ENCODE measurements at regions of chr2 and their contacts with region 1.

Region 1: DNA sequence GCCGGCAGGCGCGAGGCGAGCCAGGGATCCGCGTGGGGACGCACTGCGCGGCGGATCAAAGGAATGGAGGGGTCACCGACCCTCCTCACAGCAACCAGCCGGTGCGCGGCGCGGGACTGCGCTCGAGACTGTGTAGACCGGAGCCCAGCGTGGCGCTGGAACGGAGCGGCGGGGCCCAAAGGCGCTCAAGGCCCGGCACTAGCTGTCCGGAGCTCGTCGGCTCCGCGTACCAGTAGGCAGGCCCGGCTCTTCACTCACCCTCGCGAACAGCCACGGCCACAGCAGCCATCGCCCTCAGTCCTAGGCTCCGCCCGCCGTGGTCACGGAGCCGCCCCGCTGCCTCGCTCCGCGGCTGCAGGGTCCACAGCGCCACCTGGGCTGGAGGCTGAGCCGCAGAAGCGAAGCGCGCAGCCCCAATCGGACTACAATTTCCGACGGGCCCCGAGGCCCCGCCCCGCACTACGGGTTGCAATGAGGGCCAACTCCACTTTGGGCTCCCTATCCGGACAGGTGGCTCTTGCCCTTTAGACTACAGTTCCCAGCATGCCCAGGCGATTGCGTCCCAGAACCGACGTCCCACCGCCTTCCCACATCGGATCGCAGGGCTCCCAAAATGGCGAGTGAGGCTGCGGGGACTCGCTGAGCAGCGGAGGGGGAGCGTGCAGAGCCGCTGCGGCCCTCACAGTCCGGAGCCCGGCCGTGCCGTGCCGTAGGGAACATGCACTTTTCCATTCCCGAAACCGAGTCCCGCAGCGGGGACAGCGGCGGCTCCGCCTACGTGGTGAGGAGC is at the starts of genes EIF2B4 and SNX17:
- DNase-seq: peak; percentile 97
- ATAC-seq: peak; percentile 92
- H3K4me3 ChIP-seq: peak within 1 kb of the TSS; percentile 85
- H3K27ac ChIP-seq: peak within 1 kb of the TSS; percentile 93
- H3K4me1 ChIP-seq: peaks cover 4% of the 10 kb centered on the region; the same call in 1 of the 2 replicates
- H3K27me3 ChIP-seq: no peaks in the 10 kb centered on the region
- CTCF ChIP-seq: peak; percentile 74 to 99 (median 85); a peak in 5 of 6 replicates
- EP300 ChIP-seq: no peak; a peak in 1 of 4 replicates
- POLR2A ChIP-seq: peak; percentile 95
- RAD21 ChIP-seq: peak; percentile 50
- polyA plus RNA-seq, gene EIF2B4: 13.4 to 27.8 TPM
- polyA plus RNA-seq, gene SNX17: 6.5 to 18.9 TPM

Region 2: GRCh38 chr2:27322766-27323595 is 47.2 kb before region 1 on chr2 and contains the start of gene MPV17:
- CTCF ChIA-PET with region 1: no interaction called
- POLR2A ChIA-PET with region 1: interaction called, 5 read pairs
- RAD21 ChIA-PET with region 1: interaction called, 5 read pairs
- SMC1A ChIA-PET with region 1: interaction called, 4 read pairs
- in situ Hi-C with region 1: no loop called
- intact Hi-C with region 1: loop called (anchors 2 kb)
- DNase-seq: peak; percentile 61
- ATAC-seq: peak; percentile 97
- H3K4me3 ChIP-seq: peak within 1 kb of the TSS; percentile 99
- H3K27ac ChIP-seq: peak within 1 kb of the TSS; percentile 95
- H3K4me1 ChIP-seq: peaks cover 6% of the 10 kb centered on the region
- H3K27me3 ChIP-seq: no peaks in the 10 kb centered on the region
- CTCF ChIP-seq: no peak
- EP300 ChIP-seq: 0 out of 4 replicates have a peak, but pooled peaks of 1 of the 2 experiments have one; percentile 12
- POLR2A ChIP-seq: peak; percentile 95
- RAD21 ChIP-seq: no peak
- polyA plus RNA-seq, gene MPV17: 67.6 to 69.8 TPM

Region 3: GRCh38 chr2:27356382-27357181 is 13.6 kb before region 1 on chr2 and contains the start of gene GTF3C2:
- CTCF ChIA-PET with region 1: interaction called, 8 read pairs
- POLR2A ChIA-PET with region 1: interaction called, 10 read pairs
- RAD21 ChIA-PET with region 1: interaction called, 3 read pairs
- SMC1A ChIA-PET with region 1: interaction called, 11 read pairs
- in situ Hi-C with region 1: no loop called
- intact Hi-C with region 1: loop called (anchors 1 kb)
- DNase-seq: peak; percentile 88
- ATAC-seq: peak; percentile 91
- H3K4me3 ChIP-seq: peak within 1 kb of the TSS; percentile 97
- H3K27ac ChIP-seq: peak within 1 kb of the TSS; percentile 96
- H3K4me1 ChIP-seq: no peaks in the 10 kb centered on the region; the same call in 1 of the 2 replicates
- H3K27me3 ChIP-seq: no peaks in the 10 kb centered on the region
- CTCF ChIP-seq: no peak
- EP300 ChIP-seq: no peak
- POLR2A ChIP-seq: peak; percentile 81
- RAD21 ChIP-seq: no peak
- polyA plus RNA-seq, gene GTF3C2: 45.9 to 59.0 TPM

Region 4: DNA sequence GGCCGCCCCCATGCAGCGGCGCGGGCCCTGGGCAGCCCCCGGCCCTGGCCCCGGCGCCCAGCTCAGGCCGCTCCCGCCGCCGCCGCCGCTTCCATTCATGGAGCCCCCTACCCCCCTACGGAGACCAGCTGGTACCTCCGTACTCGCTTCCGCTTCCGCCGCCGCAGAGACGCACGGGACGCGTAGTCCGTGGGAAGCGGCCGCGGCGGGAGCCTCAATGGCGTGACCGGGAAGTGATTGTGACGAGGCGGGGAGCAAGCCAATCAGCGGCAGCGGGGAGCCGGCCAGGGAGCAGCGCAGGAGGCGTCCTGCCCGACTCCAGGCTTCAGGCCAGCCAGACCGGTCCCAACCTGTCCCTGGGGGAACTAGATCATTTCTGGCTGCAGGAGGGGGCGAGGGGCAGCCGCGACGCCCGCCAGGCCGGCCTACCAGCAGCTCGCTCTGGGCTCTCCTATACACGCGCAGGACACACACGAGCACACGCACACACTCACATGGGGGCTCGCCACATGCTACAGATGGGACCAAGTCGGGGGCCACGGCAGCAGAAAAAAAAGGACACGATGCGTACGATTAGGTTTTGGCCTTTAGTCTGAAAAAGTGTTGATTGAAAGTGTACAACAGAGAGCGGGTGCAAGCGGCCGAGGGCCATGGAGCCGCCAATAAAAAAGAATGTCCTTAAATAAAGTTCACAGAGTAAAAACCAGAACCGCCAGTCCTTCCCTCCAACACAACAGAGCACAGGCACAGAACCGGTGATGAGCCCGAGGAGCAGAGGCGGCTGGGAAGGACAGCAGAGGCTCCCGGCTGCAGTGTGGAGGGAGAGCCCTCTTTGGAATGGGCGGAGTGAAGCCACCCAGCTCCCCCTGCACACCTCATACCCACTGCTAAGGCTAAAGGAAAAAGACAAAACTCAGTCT is 10.7 kb after region 1 on chr2 and contains the start of gene ZNF513:
- CTCF ChIA-PET with region 1: interaction called, 5 read pairs
- POLR2A ChIA-PET with region 1: interaction called, 23 read pairs
- RAD21 ChIA-PET with region 1: interaction called, 5 read pairs
- SMC1A ChIA-PET with region 1: interaction called, 9 read pairs
- in situ Hi-C with region 1: no loop called
- intact Hi-C with region 1: loop called (anchors 1 kb)
- DNase-seq: peak; percentile 55
- ATAC-seq: peak; percentile 95
- H3K4me3 ChIP-seq: peak within 1 kb of the TSS; percentile 69
- H3K27ac ChIP-seq: peak within 1 kb of the TSS; percentile 96
- H3K4me1 ChIP-seq: peaks cover 9% of the 10 kb centered on the region; the same call in 1 of the 2 replicates
- H3K27me3 ChIP-seq: no peaks in the 10 kb centered on the region
- CTCF ChIP-seq: no peak
- EP300 ChIP-seq: no peak
- POLR2A ChIP-seq: peak; percentile 91
- RAD21 ChIP-seq: no peak
- polyA plus RNA-seq, gene ZNF513: 0.06 to 0.18 TPM

Region 5: DNA sequence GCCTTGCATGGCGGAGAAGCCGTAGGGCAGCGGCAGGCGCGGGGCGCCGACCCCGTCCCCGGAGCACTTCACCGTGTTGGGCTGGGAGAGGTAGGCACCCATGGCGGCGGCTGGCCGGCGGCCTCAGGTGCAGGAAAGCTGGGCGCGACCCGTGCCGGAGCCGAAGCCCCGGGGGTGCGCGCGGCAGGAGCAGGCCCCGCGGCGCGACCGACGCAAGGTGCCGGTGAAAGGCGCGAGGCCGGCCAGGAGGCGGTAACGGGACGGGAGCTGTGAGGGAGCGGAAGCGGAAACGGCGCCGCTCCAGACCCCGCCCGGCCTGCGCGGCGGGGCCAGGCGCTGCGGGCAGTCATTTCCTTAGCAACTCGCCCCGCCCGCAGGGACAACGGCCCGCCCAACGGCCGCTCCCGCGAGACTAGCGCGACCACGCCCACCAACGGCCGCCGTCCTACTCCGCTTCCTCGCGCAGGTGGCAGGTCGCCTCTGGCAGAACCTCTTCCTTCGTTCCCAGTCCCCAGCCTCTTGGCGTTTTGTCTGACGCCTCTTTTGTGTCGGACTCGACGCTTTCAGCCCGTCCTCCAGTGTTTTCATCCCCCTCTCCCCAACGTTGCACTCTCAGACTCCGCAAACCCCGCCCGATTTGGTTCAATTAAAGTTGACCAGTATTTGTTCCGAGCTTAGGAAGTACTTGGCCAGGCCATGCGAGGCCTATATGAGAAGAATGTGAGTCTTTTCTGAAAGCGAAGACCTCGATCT is 39.3 kb after region 1 on chr2 and contains the start of gene PPM1G:
- CTCF ChIA-PET with region 1: interaction called, 10 read pairs
- POLR2A ChIA-PET with region 1: interaction called, 12 read pairs
- RAD21 ChIA-PET with region 1: interaction called, 5 read pairs
- SMC1A ChIA-PET with region 1: interaction called, 6 read pairs
- in situ Hi-C with region 1: no loop called
- intact Hi-C with region 1: loop called (anchors 5 kb)
- DNase-seq: peak; percentile 85
- ATAC-seq: peak; percentile 97
- H3K4me3 ChIP-seq: peak within 1 kb of the TSS; percentile 99
- H3K27ac ChIP-seq: peak within 1 kb of the TSS; percentile 76
- H3K4me1 ChIP-seq: peaks cover 6% of the 10 kb centered on the region; the same call in 1 of the 2 replicates
- H3K27me3 ChIP-seq: no peaks in the 10 kb centered on the region
- CTCF ChIP-seq: no peak
- EP300 ChIP-seq: no peak
- POLR2A ChIP-seq: peak; percentile 95
- RAD21 ChIP-seq: no peak
- polyA plus RNA-seq, gene PPM1G: 78.5 to 81.1 TPM

Region 6: GRCh38 chr2:27428213-27428977 is 58.2 kb after region 1 on chr2 and contains the start of gene NRBP1:
- CTCF ChIA-PET with region 1: interaction called, 13 read pairs
- POLR2A ChIA-PET with region 1: interaction called, 14 read pairs
- RAD21 ChIA-PET with region 1: interaction called, 7 read pairs
- SMC1A ChIA-PET with region 1: interaction called, 13 read pairs
- in situ Hi-C with region 1: no loop called
- intact Hi-C with region 1: no loop called
- DNase-seq: peak; percentile 52
- ATAC-seq: peak; percentile 93
- H3K4me3 ChIP-seq: peak within 1 kb of the TSS; percentile 97
- H3K27ac ChIP-seq: peak within 1 kb of the TSS; percentile 85
- H3K4me1 ChIP-seq: no peaks in the 10 kb centered on the region
- H3K27me3 ChIP-seq: no peaks in the 10 kb centered on the region
- CTCF ChIP-seq: no peak
- EP300 ChIP-seq: no peak
- POLR2A ChIP-seq: peak; percentile 93
- RAD21 ChIP-seq: no peak
- polyA plus RNA-seq, gene NRBP1: 5.7 to 8.6 TPM